Activated CD8-positive, alpha-beta T cell treated with anti-CD3 and anti-CD28 coated beads for 36 hours (primary cell): ENCODE measurements at regions of chr4 and their contacts with region 1.

Region 1: DNA sequence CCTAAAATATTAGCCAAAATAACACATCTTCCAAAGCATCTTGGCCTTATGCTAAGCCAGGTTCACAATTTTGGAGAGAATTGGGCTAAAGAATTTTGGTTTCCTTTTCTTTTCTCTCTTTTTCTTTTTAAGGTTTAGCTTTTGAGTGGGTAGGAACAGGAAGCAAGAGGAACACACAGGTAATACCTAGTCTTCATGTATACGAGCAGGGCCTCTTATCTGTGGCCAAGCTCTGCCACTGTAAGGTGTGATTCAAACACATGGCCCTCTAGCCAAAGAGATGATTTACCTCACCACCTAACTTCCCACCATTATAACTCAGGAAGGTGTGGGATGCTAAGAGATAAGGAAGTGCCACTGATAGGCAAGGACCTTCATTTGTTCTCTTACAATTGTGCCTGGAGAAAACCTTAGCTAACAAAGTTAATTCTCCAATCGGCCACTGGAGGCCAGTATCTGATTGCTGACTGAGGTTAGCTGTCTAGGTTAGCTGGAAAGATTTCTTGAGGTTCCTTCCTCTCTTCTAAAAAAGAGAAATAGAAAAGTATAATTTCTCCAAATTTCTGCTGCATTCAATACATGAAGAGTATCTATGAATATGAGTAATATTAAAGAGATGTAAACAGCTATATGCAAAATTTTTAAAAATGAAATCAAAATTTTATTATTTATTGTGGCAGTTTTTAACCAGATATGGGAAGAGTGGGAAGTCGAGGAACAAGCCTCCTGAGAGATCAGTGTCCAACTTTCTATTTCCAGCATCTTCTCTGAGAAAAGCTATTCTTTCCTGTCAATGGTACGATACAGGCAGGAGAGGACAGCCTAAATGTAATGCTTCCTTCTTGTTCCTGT is 30.1 kb upstream of the BBS7 start:
- DNase-seq: peak; percentile 68
- ATAC-seq: peak; percentile 85
- H3K4me3 Mint-ChIP-seq: no peak overlapping the region
- H3K27ac Mint-ChIP-seq: no peak overlapping the region
- H3K4me1 Mint-ChIP-seq: peaks cover 8% of the 10 kb centered on the region
- H3K27me3 Mint-ChIP-seq: peaks cover 3% of the 10 kb centered on the region
- CTCF ChIP-seq: peak; percentile 83

Region 2: DNA sequence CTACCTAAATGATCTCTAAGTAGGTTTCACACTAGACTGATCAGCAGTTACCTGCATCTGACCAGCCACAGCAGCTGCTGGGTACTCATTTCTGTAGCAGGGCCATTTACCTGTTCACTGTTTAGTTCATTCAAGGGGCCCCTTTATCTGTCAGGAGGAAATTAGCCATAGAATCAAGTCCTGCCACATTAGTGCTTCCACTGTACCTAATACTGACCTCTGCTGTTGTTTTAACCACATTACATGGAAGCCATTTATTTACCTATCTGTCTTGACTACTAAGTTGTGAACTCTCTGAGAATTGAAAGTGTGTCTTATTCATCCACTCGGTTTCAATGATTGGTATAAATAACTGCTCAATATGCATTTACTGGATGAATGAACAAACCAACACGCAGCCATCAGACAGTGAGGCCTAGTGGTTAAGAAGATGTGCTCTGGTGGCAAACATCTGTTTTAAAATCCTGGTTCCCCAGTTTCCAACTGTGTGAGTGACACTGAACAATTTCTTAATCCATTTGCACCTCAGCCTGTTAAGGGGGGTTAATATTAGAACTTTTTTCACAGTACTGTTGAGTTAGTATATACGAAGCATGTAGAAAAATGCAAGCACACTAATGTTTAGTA is 173.6 kb before region 1 on chr4:
- CTCF ChIA-PET with region 1: no interaction called
- POLR2A ChIA-PET with region 1: no interaction called
- intact Hi-C with region 1: no loop called
- DNase-seq: peak; percentile 27
- ATAC-seq: peak; percentile 96
- H3K4me3 Mint-ChIP-seq: no peak overlapping the region
- H3K27ac Mint-ChIP-seq: no peak overlapping the region
- H3K4me1 Mint-ChIP-seq: peaks cover 3% of the 10 kb centered on the region
- H3K27me3 Mint-ChIP-seq: peaks cover 4% of the 10 kb centered on the region
- CTCF ChIP-seq: peak; percentile 82

Region 3: DNA sequence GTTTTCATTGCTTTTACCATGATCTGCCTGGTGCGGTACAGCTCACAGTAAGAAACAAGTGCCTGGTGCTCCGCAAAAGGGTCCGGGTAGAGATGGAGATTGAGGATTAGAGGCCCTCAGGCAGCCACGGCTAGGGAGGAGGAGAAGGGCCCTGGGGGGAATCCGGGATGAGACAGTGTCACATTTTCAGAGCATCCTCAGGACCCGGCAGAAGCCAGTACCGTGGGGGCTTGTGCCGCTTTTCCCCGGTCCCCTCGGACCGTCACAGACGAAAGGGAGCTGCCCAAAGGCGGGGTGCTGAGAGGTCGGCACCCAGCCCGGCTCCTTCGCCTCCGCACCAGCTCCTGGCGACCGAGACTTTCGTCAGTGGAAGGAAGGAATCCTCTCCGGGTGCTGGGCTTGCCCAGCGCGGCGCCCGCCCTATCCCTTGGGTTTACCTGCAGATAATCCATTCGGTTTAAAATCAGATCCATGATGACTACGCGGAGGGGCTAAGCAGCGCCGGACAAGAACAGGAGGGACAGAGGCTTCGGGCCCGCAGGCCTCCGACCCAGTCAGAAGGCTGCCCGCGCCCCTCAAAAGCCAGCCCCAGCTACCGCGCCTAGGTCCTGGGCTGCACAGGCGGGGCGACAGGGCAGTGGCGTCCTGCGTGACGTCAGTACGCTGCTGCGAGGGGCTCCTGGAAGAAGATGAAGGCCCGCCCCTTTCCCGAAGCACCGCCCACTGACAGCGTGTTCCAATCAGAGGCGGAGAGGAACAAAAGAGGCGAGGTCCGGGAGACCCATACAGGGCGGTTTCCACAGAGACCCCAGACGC is 30.3 kb before region 1 on chr4 and contains the start of gene BBS7:
- CTCF ChIA-PET with region 1: interaction called, 12 read pairs
- POLR2A ChIA-PET with region 1: no interaction called
- intact Hi-C with region 1: no loop called
- DNase-seq: peak; percentile 99
- ATAC-seq: peak; percentile 99
- H3K4me3 Mint-ChIP-seq: peak within 1 kb of the TSS; percentile 96
- H3K27ac Mint-ChIP-seq: peak within 1 kb of the TSS; percentile 88
- H3K4me1 Mint-ChIP-seq: peaks cover 13% of the 10 kb centered on the region
- H3K27me3 Mint-ChIP-seq: peaks cover 4% of the 10 kb centered on the region
- CTCF ChIP-seq: no peak
- total RNA-seq, gene BBS7: 12.7 to 15.8 TPM

Region 4: DNA sequence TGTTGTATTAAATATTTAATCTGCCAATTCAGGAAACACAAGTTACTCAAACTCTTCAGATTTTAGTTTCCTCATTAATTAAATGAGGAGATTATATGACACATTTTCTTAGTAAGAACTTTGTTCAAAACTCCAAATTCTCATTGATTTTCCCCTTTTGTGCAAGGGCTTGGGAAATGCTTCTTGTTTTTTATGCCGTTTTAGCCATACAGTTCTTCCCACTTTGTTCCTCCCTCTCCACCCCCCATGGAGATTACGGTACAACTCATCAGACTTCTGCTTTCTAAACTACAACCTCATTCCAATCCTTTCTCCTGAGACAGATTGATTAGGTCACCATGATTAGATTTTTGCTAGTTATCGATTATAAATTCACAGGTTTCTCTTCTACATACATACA is 19.2 kb before region 1 on chr4:
- CTCF ChIA-PET with region 1: interaction called, 27 read pairs
- POLR2A ChIA-PET with region 1: no interaction called
- intact Hi-C with region 1: no loop called
- DNase-seq: no peak
- ATAC-seq: no peak
- H3K4me3 Mint-ChIP-seq: no peak overlapping the region
- H3K27ac Mint-ChIP-seq: no peak overlapping the region
- H3K4me1 Mint-ChIP-seq: peaks cover 2% of the 10 kb centered on the region
- H3K27me3 Mint-ChIP-seq: peaks cover 39% of the 10 kb centered on the region
- CTCF ChIP-seq: no peak

Region 5: GRCh38 chr4:121888134-121888533 is 12.2 kb before region 1 on chr4:
- CTCF ChIA-PET with region 1: interaction called, 27 read pairs
- POLR2A ChIA-PET with region 1: no interaction called
- intact Hi-C with region 1: no loop called
- DNase-seq: no peak
- ATAC-seq: no peak
- H3K4me3 Mint-ChIP-seq: no peak overlapping the region
- H3K27ac Mint-ChIP-seq: no peak overlapping the region
- H3K4me1 Mint-ChIP-seq: peaks cover 2% of the 10 kb centered on the region
- H3K27me3 Mint-ChIP-seq: peaks cover 22% of the 10 kb centered on the region
- CTCF ChIP-seq: no peak

Region 6: DNA sequence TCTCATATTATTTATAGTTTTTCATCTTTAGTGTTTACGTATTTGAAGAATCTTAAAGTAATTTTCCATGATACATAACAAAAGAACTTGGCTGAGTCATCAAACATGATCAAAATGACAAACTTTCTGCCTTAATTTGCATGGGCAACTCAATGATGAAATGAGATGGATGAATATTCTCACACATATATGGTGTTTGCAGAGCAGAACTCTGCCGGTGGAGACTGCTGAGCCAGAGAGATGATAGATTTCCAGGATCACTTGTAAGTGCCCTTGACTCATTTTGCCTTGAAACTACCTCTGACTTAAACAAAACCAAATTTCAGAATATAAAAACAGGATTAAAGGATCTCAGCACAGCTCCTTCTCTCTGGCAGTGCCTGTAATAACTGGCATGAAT is 13.3 kb after region 1 on chr4:
- CTCF ChIA-PET with region 1: interaction called, 15 read pairs
- POLR2A ChIA-PET with region 1: interaction called, 3 read pairs
- intact Hi-C with region 1: no loop called
- DNase-seq: no peak
- ATAC-seq: no peak
- H3K4me3 Mint-ChIP-seq: no peak overlapping the region
- H3K27ac Mint-ChIP-seq: no peak overlapping the region
- H3K4me1 Mint-ChIP-seq: peaks cover 7% of the 10 kb centered on the region
- H3K27me3 Mint-ChIP-seq: peaks cover 4% of the 10 kb centered on the region
- CTCF ChIP-seq: no peak

Region 7: DNA sequence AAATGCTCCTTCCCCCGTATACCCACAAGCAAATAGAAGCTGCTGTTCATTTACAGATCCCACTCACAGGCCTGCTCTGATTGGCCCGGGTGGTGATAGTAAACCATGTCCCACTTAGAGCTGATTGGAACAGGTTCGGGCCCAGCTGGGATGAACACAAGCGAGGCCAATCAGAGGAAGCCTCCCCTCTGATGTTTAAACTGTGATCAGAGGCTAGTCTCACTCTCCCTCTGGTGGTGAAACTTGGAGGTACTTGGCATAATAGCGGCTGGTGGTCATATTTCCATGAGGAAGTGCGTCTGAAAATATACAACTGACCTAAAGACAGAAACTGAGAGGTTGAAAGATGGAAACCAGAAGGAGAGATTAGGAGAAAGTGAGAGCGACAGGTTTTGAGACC is 103.0 kb after region 1 on chr4:
- CTCF ChIA-PET with region 1: interaction called, 12 read pairs
- POLR2A ChIA-PET with region 1: no interaction called
- intact Hi-C with region 1: loop called (anchors 5 kb)
- DNase-seq: peak; percentile 48
- ATAC-seq: peak; percentile 72
- H3K4me3 Mint-ChIP-seq: no peak overlapping the region
- H3K27ac Mint-ChIP-seq: no peak overlapping the region
- H3K4me1 Mint-ChIP-seq: no peaks in the 10 kb centered on the region
- H3K27me3 Mint-ChIP-seq: peaks cover 12% of the 10 kb centered on the region
- CTCF ChIP-seq: peak; percentile 53